Right cardiac atrium (tissue), 5 donors: ENCODE measurements at regions of chr19 and their contacts with region 1.

Region 1: DNA sequence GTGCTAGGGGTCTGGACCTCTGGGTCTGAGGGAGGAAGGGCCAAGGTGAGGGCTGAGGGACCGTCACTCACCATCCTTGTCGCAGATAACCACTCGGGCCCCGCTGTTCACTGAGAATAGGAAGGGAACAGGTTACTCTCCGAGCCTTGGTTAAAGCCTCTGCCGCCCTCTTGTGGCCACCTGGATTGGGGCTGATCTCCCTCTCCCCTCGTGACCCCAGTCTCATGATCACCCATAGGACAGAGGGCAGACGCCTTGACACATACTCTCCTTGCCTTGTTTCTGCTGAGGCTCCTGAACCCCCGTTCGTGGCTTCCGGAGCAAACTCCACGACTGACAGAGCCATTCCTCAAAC is 580 bp downstream of the HSD17B14 start:
- DNase-seq: peak; percentile 91 to 98 (median 96)
- ATAC-seq: peak; percentile 90 to 91
- H3K4me3 ChIP-seq: peak overlapping the region; percentile 37
- H3K27ac ChIP-seq: no peak overlapping the region
- H3K4me1 ChIP-seq: no peaks in the 10 kb centered on the region
- H3K27me3 ChIP-seq: no peaks in the 10 kb centered on the region

Region 2: GRCh38 chr19:48646001-48646721 is 189.6 kb before region 1 on chr19 and contains the start of gene CA11:
- intact Hi-C with region 1: loop called in 3 of 4 experiments (anchors 5 to 10 kb)
- DNase-seq: peak; percentile 89 to 96 (median 96)
- ATAC-seq: peak; percentile 92 to 93
- H3K4me3 ChIP-seq: peak within 1 kb of the TSS; percentile 63
- H3K27ac ChIP-seq: peak within 1 kb of the TSS; percentile 63
- H3K4me1 ChIP-seq: no peaks in the 10 kb centered on the region
- H3K27me3 ChIP-seq: no peaks in the 10 kb centered on the region
- total RNA-seq, gene CA11: 8.6 to 16.5 (median 13.2) TPM